GM12878 (cell line): ENCODE measurements at regions of chr7 and their contacts with region 1.

Region 1: GRCh38 chr7:55964261-55965099 is at the start of gene NIPSNAP2:
- DNase-seq: no peak
- ATAC-seq: peak; percentile 92
- H3K4me3 ChIP-seq: peak within 1 kb of the TSS; percentile 91
- H3K27ac ChIP-seq: peak within 1 kb of the TSS; percentile 73
- H3K4me1 ChIP-seq: peaks cover 6% of the 10 kb centered on the region
- H3K27me3 ChIP-seq: no peaks in the 10 kb centered on the region
- CTCF ChIP-seq: peak; percentile 34 to 67 (median 48); a peak in 4 of 6 replicates
- EP300 ChIP-seq: no peak
- POLR2A ChIP-seq: peak; percentile 84
- RAD21 ChIP-seq: peak; percentile 78
- polyA plus RNA-seq, gene NIPSNAP2: 24.7 to 29.9 TPM

Region 2: DNA sequence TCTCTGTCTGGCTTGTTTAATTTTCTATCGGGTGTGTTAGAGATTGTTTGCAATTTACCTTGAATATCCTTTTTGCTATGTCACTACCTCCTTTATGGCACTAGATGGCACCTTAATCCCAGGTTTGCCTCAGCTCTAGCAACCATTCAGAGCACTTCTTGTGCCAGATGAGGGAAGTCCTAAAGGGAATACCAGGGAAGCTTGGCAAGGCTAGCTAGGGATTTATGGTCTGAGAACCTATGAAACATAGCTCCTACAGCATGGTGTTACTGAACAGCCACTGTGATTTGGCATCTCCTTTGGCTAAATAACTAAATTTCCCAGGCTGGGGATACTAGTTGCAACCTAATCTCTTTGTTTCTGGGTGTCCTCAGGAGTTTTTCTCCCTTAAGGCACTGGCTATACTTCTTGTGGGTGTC is 323.2 kb before region 1 on chr7:
- CTCF ChIA-PET with region 1: interaction called, 7 read pairs
- POLR2A ChIA-PET with region 1: no interaction called
- RAD21 ChIA-PET with region 1: interaction called, 5 read pairs
- SMC1A ChIA-PET with region 1: interaction called, 6 read pairs
- in situ Hi-C with region 1: loop called (anchors 5 kb)
- intact Hi-C with region 1: loop called (anchors 1 kb)
- DNase-seq: peak; percentile 65
- ATAC-seq: peak; percentile 95
- H3K4me3 ChIP-seq: no peak overlapping the region
- H3K27ac ChIP-seq: no peak overlapping the region
- H3K4me1 ChIP-seq: peaks cover 3% of the 10 kb centered on the region
- H3K27me3 ChIP-seq: no peaks in the 10 kb centered on the region
- CTCF ChIP-seq: peak; percentile 74 to 89 (median 76)
- EP300 ChIP-seq: no peak
- POLR2A ChIP-seq: no peak
- RAD21 ChIP-seq: peak; percentile 99

Region 3: GRCh38 chr7:55649238-55649637 is 315.2 kb before region 1 on chr7:
- CTCF ChIA-PET with region 1: no interaction called
- POLR2A ChIA-PET with region 1: no interaction called
- RAD21 ChIA-PET with region 1: no interaction called
- SMC1A ChIA-PET with region 1: no interaction called
- in situ Hi-C with region 1: loop called (anchors 5 kb)
- intact Hi-C with region 1: no loop called
- DNase-seq: no peak
- ATAC-seq: no peak
- H3K4me3 ChIP-seq: no peak overlapping the region
- H3K27ac ChIP-seq: no peak overlapping the region
- H3K4me1 ChIP-seq: no peaks in the 10 kb centered on the region; the same call in 1 of the 2 replicates
- H3K27me3 ChIP-seq: no peaks in the 10 kb centered on the region
- CTCF ChIP-seq: no peak
- EP300 ChIP-seq: no peak
- POLR2A ChIP-seq: no peak
- RAD21 ChIP-seq: no peak

Region 4: GRCh38 chr7:56063882-56064625 is 99.6 kb after region 1 on chr7 and contains the start of gene SUMF2:
- CTCF ChIA-PET with region 1: no interaction called
- POLR2A ChIA-PET with region 1: interaction called, 5 read pairs
- RAD21 ChIA-PET with region 1: no interaction called
- SMC1A ChIA-PET with region 1: no interaction called
- in situ Hi-C with region 1: no loop called
- intact Hi-C with region 1: loop called (anchors 5 kb)
- DNase-seq: peak; percentile 78
- ATAC-seq: peak; percentile 95
- H3K4me3 ChIP-seq: peak within 1 kb of the TSS; percentile 72
- H3K27ac ChIP-seq: peak within 1 kb of the TSS; percentile 71
- H3K4me1 ChIP-seq: peaks cover 6% of the 10 kb centered on the region; the same call in 1 of the 2 replicates
- H3K27me3 ChIP-seq: no peaks in the 10 kb centered on the region
- CTCF ChIP-seq: peak in 2 of 3 experiments; percentile 12 to 32; a peak in 2 of 6 replicates
- EP300 ChIP-seq: no peak
- POLR2A ChIP-seq: peak; percentile 99
- RAD21 ChIP-seq: no peak
- polyA plus RNA-seq, gene SUMF2: 39.9 to 62.4 TPM

Region 5: DNA sequence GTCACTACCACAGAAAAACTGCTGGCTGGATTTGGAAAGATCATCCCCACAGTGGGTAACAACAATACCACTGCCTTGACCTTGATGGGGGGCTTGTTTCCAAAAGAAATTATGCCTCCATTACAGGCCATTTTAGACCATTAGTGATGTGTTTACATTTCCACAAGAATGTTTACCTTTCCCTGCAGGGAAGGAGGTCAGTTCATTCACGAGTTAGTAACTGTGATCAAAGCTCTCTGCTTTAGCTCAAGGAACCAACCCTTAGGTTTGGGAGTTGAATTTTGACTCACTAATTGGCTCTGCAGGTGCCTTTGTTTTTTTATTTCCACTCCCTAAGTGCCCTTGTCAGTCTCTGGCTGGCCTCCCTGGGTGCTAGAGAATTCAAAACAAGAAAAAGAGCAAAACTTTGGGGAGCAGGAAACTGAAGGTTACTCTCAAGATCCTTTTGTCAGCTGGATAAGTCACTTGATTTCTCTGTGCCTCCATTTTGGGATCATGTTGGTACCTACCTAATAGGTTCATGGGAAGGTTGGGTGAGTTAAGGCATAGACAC is 192.8 kb after region 1 on chr7:
- CTCF ChIA-PET with region 1: no interaction called
- POLR2A ChIA-PET with region 1: no interaction called
- RAD21 ChIA-PET with region 1: no interaction called
- SMC1A ChIA-PET with region 1: no interaction called
- in situ Hi-C with region 1: no loop called
- intact Hi-C with region 1: no loop called
- DNase-seq: no peak
- ATAC-seq: no peak
- H3K4me3 ChIP-seq: no peak overlapping the region
- H3K27ac ChIP-seq: no peak overlapping the region
- H3K4me1 ChIP-seq: no peaks in the 10 kb centered on the region
- H3K27me3 ChIP-seq: no peaks in the 10 kb centered on the region
- CTCF ChIP-seq: no peak
- EP300 ChIP-seq: no peak
- POLR2A ChIP-seq: no peak
- RAD21 ChIP-seq: no peak

Region 6: DNA sequence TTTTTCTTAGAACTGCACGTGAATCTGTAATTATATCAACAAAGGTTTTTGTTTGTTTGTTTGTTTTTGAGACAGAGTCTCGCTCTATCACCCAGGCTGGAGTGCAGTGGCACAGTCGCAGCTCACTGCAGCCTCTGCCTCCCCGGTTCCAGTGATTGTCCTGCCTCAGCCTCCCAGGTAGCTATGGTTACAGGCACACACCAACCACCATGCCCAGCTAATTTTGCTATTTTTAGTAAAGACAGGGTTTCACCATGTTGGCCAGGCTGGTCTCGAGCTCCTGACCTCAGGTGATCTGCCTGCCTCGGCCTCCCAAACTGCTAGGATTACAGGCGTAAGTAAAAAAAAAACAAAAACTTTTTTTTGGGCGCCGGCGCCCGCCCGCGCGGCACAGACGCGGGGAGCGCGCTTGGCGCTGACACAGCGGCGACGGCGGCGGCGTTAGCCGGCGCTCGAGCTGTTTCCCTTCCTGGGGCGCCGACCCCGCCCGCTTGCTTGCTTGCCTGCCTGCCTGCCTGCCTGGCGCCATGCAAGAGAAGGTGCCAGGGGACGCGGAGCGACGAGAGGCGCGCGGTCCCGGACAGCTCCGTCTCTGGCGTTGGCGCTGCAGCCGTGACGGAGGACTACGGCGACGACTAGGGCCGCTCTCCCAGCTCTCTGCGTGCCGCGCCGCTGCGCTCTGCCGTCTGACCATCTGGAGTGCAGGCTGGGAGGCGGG is 323.1 kb after region 1 on chr7:
- CTCF ChIA-PET with region 1: no interaction called
- POLR2A ChIA-PET with region 1: no interaction called
- RAD21 ChIA-PET with region 1: no interaction called
- SMC1A ChIA-PET with region 1: no interaction called
- in situ Hi-C with region 1: no loop called
- intact Hi-C with region 1: no loop called
- DNase-seq: no peak
- ATAC-seq: no peak
- H3K4me3 ChIP-seq: no peak overlapping the region
- H3K27ac ChIP-seq: no peak overlapping the region
- H3K4me1 ChIP-seq: no peaks in the 10 kb centered on the region
- H3K27me3 ChIP-seq: no peaks in the 10 kb centered on the region
- CTCF ChIP-seq: no peak
- EP300 ChIP-seq: no peak
- POLR2A ChIP-seq: no peak
- RAD21 ChIP-seq: no peak